CD4-positive, alpha-beta T cell (primary cell): ENCODE measurements at regions of chr3 and their contacts with region 1.

Region 1: GRCh38 chr3:47989981-47990440 is 26.2 kb downstream of the MAP4 start:
- DNase-seq: peak; percentile 44 to 87 (median 66)
- ATAC-seq: peak; percentile 99
- H3K4me3 ChIP-seq: no peak overlapping the region
- H3K4me3 Mint-ChIP-seq: no peak overlapping the region
- H3K27ac ChIP-seq: no peak overlapping the region
- H3K27ac Mint-ChIP-seq: no peak overlapping the region
- H3K4me1 ChIP-seq: no peaks in the 10 kb centered on the region
- H3K4me1 Mint-ChIP-seq: peaks cover 5% of the 10 kb centered on the region
- H3K27me3 ChIP-seq: no peaks in the 10 kb centered on the region
- H3K27me3 Mint-ChIP-seq: no peaks in the 10 kb centered on the region
- CTCF ChIP-seq: peak; percentile 92

Region 2: DNA sequence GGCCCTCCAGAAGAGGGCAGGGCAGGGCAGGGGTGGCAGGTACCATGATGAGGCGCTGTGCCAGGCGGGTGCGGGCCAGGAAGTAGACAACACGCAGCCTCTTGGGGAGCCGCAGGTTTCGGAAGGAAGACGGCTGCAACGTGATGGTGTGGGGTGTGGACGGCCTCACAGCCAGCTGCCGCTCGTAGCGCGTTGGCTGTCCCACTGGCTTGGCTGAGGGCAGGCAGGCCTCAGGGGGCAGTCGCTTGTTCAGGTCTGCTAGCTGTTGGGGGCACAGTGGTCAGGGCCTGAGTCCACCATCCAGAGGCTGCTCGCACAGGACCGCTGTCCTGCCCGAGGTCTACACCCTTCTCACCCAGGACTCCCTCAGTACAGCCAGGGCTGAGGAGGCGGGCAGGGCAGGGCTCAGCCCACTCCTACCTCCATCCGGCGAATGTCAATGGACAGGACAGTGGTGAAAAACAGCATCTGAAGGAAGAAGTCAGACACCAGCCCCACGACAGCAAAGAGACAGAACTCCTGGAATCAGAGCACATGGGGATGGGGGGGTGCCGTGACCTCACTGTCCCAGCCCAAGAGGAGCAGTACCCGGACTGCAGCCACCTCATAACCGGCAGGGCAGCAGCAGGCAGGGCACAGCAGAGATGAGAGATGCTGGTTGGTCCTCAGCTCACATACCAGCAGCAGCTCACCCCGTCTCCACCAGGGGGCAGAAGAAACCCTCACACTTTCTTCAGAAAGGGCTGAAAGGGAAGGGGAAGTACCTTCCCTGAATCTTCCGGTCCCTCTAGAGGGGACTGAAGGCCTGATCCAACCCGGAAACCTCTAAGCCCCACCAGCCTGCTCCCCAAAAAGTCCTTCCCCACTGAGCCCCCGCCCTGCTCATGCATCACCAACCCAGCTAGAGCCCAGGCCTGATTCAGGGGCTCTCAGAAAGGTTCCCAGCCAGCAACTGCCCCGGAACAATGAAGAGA is 569.2 kb before region 1 on chr3:
- CTCF ChIA-PET with region 1: no interaction called
- POLR2A ChIA-PET with region 1: no interaction called
- intact Hi-C with region 1: loop called in 1 of 2 experiments (anchors 5 kb)
- DNase-seq: peak; percentile 78 to 94 (median 86)
- ATAC-seq: peak; percentile 99
- H3K4me3 ChIP-seq: no peak overlapping the region
- H3K4me3 Mint-ChIP-seq: peak overlapping the region; percentile 57
- H3K27ac ChIP-seq: peak overlapping the region; percentile 62 to 82
- H3K27ac Mint-ChIP-seq: peak overlapping the region; percentile 94
- H3K4me1 ChIP-seq: peaks cover 17% of the 10 kb centered on the region
- H3K4me1 Mint-ChIP-seq: peaks cover 12% of the 10 kb centered on the region
- H3K27me3 ChIP-seq: no peaks in the 10 kb centered on the region
- H3K27me3 Mint-ChIP-seq: no peaks in the 10 kb centered on the region
- CTCF ChIP-seq: peak; percentile 84

Region 3: GRCh38 chr3:47824541-47825473 is 165.2 kb before region 1 on chr3:
- CTCF ChIA-PET with region 1: interaction called, 12 read pairs
- POLR2A ChIA-PET with region 1: interaction called, 5 read pairs
- intact Hi-C with region 1: loop called in 1 of 2 experiments (anchors 1 kb)
- DNase-seq: peak; percentile 55 to 92 (median 74)
- ATAC-seq: peak; percentile 98
- H3K4me3 ChIP-seq: peak overlapping the region; percentile 97
- H3K4me3 Mint-ChIP-seq: peak overlapping the region; percentile 90
- H3K27ac ChIP-seq: peak overlapping the region; percentile 60 to 72
- H3K27ac Mint-ChIP-seq: peak overlapping the region; percentile 82
- H3K4me1 ChIP-seq: peaks cover 32% of the 10 kb centered on the region
- H3K4me1 Mint-ChIP-seq: peaks cover 35% of the 10 kb centered on the region
- H3K27me3 ChIP-seq: no peaks in the 10 kb centered on the region
- H3K27me3 Mint-ChIP-seq: no peaks in the 10 kb centered on the region
- CTCF ChIP-seq: peak; percentile 88

Region 4: GRCh38 chr3:47971081-47971480 is 18.9 kb before region 1 on chr3:
- CTCF ChIA-PET with region 1: interaction called, 12 read pairs
- POLR2A ChIA-PET with region 1: no interaction called
- intact Hi-C with region 1: no loop called
- DNase-seq: no peak
- ATAC-seq: no peak
- H3K4me3 ChIP-seq: no peak overlapping the region
- H3K4me3 Mint-ChIP-seq: no peak overlapping the region
- H3K27ac ChIP-seq: no peak overlapping the region
- H3K27ac Mint-ChIP-seq: no peak overlapping the region
- H3K4me1 ChIP-seq: no peaks in the 10 kb centered on the region
- H3K4me1 Mint-ChIP-seq: no peaks in the 10 kb centered on the region
- H3K27me3 ChIP-seq: no peaks in the 10 kb centered on the region
- H3K27me3 Mint-ChIP-seq: no peaks in the 10 kb centered on the region
- CTCF ChIP-seq: no peak

Region 5: GRCh38 chr3:48013288-48013980 is 23.4 kb after region 1 on chr3:
- CTCF ChIA-PET with region 1: interaction called, 13 read pairs
- POLR2A ChIA-PET with region 1: no interaction called
- intact Hi-C with region 1: no loop called
- DNase-seq: peak in 3 of 14 experiments; percentile 6 to 14 (median 13)
- ATAC-seq: peak; percentile 57
- H3K4me3 ChIP-seq: no peak overlapping the region
- H3K4me3 Mint-ChIP-seq: no peak overlapping the region
- H3K27ac ChIP-seq: no peak overlapping the region
- H3K27ac Mint-ChIP-seq: no peak overlapping the region
- H3K4me1 ChIP-seq: peaks cover 12% of the 10 kb centered on the region
- H3K4me1 Mint-ChIP-seq: peaks cover 48% of the 10 kb centered on the region
- H3K27me3 ChIP-seq: no peaks in the 10 kb centered on the region
- H3K27me3 Mint-ChIP-seq: no peaks in the 10 kb centered on the region
- CTCF ChIP-seq: no peak